ENCODE measurements at regions of chr7 and their contacts with region 1.

Region 1: DNA sequence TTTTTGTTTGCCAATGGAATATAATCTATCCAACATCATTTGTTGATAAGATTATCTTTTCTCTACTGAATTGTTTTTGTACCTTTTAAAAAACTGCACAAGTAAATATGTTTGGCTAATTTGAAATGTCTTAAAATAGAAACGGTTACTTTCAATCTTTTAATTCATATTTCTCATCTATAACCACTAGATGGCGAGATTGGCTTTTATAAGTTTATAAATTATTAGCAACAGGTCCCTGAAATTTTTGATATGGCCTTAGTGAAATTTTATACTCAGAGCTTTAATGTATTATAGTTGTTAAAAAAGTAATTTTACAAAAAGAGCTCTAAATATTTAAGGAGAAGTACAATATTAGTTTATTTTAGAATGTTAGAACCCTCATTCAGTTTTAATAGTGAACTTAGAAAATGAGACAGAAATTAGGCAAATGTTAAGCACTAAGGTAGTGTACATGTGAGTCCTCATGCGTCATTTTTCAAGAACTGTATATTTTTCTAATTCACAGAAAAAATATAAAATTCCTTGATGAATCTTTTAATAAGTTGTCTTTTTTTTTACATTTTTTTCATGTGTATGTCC is 592.5 kb downstream of the ARL4A start:
- DNase-seq: no peak
- ATAC-seq: no peak
- H3K4me3 ChIP-seq: no peak overlapping the region
- H3K27ac ChIP-seq: no peak overlapping the region
- H3K4me1 ChIP-seq: no peaks in the 10 kb centered on the region
- H3K27me3 ChIP-seq: no peaks in the 10 kb centered on the region
- CTCF ChIP-seq: peak; percentile 9; the same call in 1 of the 2 replicates

Region 2: GRCh38 chr7:13257661-13258060 is 22.3 kb before region 1 on chr7:
- CTCF ChIA-PET with region 1: no interaction called
- POLR2A ChIA-PET with region 1: no interaction called
- in situ Hi-C with region 1: no loop called
- intact Hi-C with region 1: no loop called
- DNase-seq: no peak
- ATAC-seq: no peak
- H3K4me3 ChIP-seq: no peak overlapping the region
- H3K27ac ChIP-seq: no peak overlapping the region
- H3K4me1 ChIP-seq: no peaks in the 10 kb centered on the region
- H3K27me3 ChIP-seq: no peaks in the 10 kb centered on the region
- CTCF ChIP-seq: no peak

Region 3: DNA sequence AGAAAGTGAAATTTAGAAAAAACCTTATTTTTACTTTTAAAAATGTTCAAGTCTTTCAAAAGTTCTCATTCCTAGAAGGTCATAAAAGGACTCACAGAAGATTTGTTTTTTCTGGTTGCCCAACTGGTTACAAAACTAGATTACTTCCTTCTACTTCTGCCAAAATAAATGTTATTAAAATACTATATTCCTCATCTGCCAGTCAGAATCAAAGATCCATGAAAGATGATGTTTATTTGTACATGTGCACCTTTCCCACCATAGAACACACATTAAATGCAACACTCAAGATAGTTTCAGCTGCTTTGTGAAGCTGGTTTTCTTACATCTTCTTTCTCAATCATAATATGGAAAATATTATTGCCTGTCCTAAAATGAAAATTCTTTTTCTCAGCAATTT is 244.1 kb after region 1 on chr7:
- CTCF ChIA-PET with region 1: no interaction called
- POLR2A ChIA-PET with region 1: no interaction called
- in situ Hi-C with region 1: no loop called
- intact Hi-C with region 1: loop called (anchors 10 kb)
- DNase-seq: no peak
- ATAC-seq: no peak
- H3K4me3 ChIP-seq: no peak overlapping the region
- H3K27ac ChIP-seq: no peak overlapping the region
- H3K4me1 ChIP-seq: no peaks in the 10 kb centered on the region
- H3K27me3 ChIP-seq: no peaks in the 10 kb centered on the region
- CTCF ChIP-seq: no peak

Region 4: DNA sequence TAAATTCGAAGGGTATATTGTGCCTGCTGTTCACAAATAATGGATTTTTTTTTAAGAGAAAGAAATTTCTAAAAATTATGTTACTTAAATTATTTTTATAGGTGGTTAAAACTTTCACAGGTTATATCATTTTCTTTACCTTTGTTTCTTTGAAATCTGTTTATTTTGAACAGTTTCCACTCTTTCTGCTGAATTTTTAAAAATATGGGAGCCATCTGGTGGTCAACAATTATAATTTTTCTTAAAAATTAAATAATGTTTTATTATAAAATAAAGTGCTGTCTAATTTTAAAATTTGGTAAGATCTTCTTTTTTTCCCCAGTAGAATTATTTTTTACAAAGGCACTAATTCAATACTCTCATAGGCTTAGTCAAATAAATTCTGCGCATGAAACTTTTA is 445.6 kb after region 1 on chr7:
- CTCF ChIA-PET with region 1: no interaction called
- POLR2A ChIA-PET with region 1: no interaction called
- in situ Hi-C with region 1: no loop called
- intact Hi-C with region 1: loop called (anchors 5 kb)
- DNase-seq: no peak
- ATAC-seq: no peak
- H3K4me3 ChIP-seq: no peak overlapping the region
- H3K27ac ChIP-seq: no peak overlapping the region
- H3K4me1 ChIP-seq: no peaks in the 10 kb centered on the region
- H3K27me3 ChIP-seq: no peaks in the 10 kb centered on the region
- CTCF ChIP-seq: no peak; the same call in 1 of the 2 replicates

Region 5: DNA sequence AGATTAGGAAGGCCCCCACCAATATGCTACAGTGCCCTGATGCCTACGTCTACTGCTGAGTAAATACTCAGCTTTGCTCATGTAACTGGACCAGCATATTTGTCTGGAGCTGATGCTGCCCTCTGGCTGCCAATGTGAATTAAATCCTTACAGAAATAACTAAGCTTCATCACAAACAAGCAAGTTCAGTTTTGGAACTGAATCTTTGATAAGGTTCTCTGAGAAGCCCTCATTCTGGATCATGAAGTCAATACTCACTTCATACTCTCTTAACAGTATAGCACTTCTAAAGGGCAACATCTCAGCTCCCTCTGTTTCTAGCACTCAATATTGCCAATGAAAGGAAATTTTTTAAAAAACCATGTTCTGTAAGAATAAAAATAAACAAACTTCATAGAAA is 462.9 kb after region 1 on chr7:
- CTCF ChIA-PET with region 1: interaction called, 6 read pairs
- POLR2A ChIA-PET with region 1: no interaction called
- in situ Hi-C with region 1: no loop called
- intact Hi-C with region 1: loop called (anchors 5 kb)
- DNase-seq: peak; percentile 36
- ATAC-seq: peak; percentile 80
- H3K4me3 ChIP-seq: no peak overlapping the region
- H3K27ac ChIP-seq: peak overlapping the region; percentile 52; the same call in 1 of the 2 replicates
- H3K4me1 ChIP-seq: no peaks in the 10 kb centered on the region
- H3K27me3 ChIP-seq: no peaks in the 10 kb centered on the region
- CTCF ChIP-seq: peak; percentile 81

Region 6: GRCh38 chr7:14457568-14458453 is 1177.9 kb after region 1 on chr7:
- CTCF ChIA-PET with region 1: no interaction called
- POLR2A ChIA-PET with region 1: no interaction called
- in situ Hi-C with region 1: no loop called
- intact Hi-C with region 1: loop called (anchors 2 kb)
- DNase-seq: peak; percentile 79
- ATAC-seq: peak; percentile 78
- H3K4me3 ChIP-seq: no peak overlapping the region; a peak in 1 of 4 replicates
- H3K27ac ChIP-seq: no peak overlapping the region
- H3K4me1 ChIP-seq: no peaks in the 10 kb centered on the region
- H3K27me3 ChIP-seq: no peaks in the 10 kb centered on the region
- CTCF ChIP-seq: peak; percentile 93

Region 7: DNA sequence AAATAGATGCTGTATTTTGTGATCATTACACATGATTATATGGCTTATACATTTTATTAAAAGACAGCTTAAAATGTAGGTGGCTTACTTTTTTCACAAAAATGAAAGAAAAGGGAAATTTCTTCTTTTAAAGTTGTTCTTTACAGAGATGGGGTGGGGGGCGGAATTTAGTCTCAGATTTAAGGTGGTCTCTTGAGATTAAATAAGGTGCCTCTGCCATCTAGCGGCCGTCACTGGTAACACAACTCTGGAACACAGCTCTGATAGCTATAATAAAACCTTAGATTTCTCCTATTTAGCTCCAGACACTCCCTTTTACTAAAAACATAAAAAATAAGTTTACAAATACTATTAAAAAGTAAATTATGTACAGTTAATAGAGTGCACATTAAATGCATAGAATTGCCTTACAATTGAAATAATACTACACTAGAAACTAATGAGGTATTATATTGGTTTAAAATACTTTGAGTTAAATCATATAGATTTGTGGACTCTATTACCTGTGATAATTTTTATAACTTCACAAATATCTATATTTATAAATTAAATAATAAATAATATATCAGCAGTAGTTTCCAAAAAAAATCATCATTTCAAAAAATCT is 1411.8 kb after region 1 on chr7:
- CTCF ChIA-PET with region 1: interaction called, 5 read pairs
- POLR2A ChIA-PET with region 1: no interaction called
- in situ Hi-C with region 1: no loop called
- intact Hi-C with region 1: loop called (anchors 2 kb)
- DNase-seq: no peak
- ATAC-seq: no peak
- H3K4me3 ChIP-seq: no peak overlapping the region
- H3K27ac ChIP-seq: no peak overlapping the region
- H3K4me1 ChIP-seq: no peaks in the 10 kb centered on the region
- H3K27me3 ChIP-seq: no peaks in the 10 kb centered on the region
- CTCF ChIP-seq: peak; percentile 87; the same call in 1 of the 2 replicates

Measured in Panc1 (cell line).